ENCODE measurements at regions of chr5 and their contacts with region 1.

Region 1: GRCh38 chr5:31825518-31826068 is 186.7 kb downstream of the PDZD2 start:
- DNase-seq: peak; percentile 90
- ATAC-seq: peak; percentile 82
- H3K4me3 ChIP-seq: no peak overlapping the region
- H3K27ac ChIP-seq: no peak overlapping the region
- H3K4me1 ChIP-seq: peaks cover 22% of the 10 kb centered on the region
- H3K27me3 ChIP-seq: no peaks in the 10 kb centered on the region
- CTCF ChIP-seq: peak; percentile 90

Region 2: GRCh38 chr5:31854181-31855133 is 28.9 kb after region 1 on chr5:
- CTCF ChIA-PET with region 1: interaction called, 5 read pairs
- POLR2A ChIA-PET with region 1: no interaction called
- intact Hi-C with region 1: loop called (anchors 1 kb)
- DNase-seq: peak; percentile 81
- ATAC-seq: peak; percentile 74
- H3K4me3 ChIP-seq: peak overlapping the region; percentile 79
- H3K27ac ChIP-seq: peak overlapping the region; percentile 69
- H3K4me1 ChIP-seq: peaks cover 20% of the 10 kb centered on the region
- H3K27me3 ChIP-seq: no peaks in the 10 kb centered on the region
- CTCF ChIP-seq: no peak

Region 3: GRCh38 chr5:31934156-31934555 is 108.6 kb after region 1 on chr5:
- CTCF ChIA-PET with region 1: interaction called, 8 read pairs
- POLR2A ChIA-PET with region 1: no interaction called
- intact Hi-C with region 1: loop called (anchors 1 kb)
- DNase-seq: peak; percentile 6
- ATAC-seq: no peak
- H3K4me3 ChIP-seq: no peak overlapping the region
- H3K27ac ChIP-seq: no peak overlapping the region
- H3K4me1 ChIP-seq: no peaks in the 10 kb centered on the region
- H3K27me3 ChIP-seq: no peaks in the 10 kb centered on the region
- CTCF ChIP-seq: no peak

Region 4: GRCh38 chr5:31987985-31988710 is 162.6 kb after region 1 on chr5:
- CTCF ChIA-PET with region 1: interaction called, 3 read pairs
- POLR2A ChIA-PET with region 1: no interaction called
- intact Hi-C with region 1: loop called (anchors 5 kb)
- DNase-seq: peak; percentile 99
- ATAC-seq: peak; percentile 84
- H3K4me3 ChIP-seq: no peak overlapping the region
- H3K27ac ChIP-seq: peak overlapping the region; percentile 46
- H3K4me1 ChIP-seq: peaks cover 45% of the 10 kb centered on the region
- H3K27me3 ChIP-seq: no peaks in the 10 kb centered on the region
- CTCF ChIP-seq: no peak

Region 5: DNA sequence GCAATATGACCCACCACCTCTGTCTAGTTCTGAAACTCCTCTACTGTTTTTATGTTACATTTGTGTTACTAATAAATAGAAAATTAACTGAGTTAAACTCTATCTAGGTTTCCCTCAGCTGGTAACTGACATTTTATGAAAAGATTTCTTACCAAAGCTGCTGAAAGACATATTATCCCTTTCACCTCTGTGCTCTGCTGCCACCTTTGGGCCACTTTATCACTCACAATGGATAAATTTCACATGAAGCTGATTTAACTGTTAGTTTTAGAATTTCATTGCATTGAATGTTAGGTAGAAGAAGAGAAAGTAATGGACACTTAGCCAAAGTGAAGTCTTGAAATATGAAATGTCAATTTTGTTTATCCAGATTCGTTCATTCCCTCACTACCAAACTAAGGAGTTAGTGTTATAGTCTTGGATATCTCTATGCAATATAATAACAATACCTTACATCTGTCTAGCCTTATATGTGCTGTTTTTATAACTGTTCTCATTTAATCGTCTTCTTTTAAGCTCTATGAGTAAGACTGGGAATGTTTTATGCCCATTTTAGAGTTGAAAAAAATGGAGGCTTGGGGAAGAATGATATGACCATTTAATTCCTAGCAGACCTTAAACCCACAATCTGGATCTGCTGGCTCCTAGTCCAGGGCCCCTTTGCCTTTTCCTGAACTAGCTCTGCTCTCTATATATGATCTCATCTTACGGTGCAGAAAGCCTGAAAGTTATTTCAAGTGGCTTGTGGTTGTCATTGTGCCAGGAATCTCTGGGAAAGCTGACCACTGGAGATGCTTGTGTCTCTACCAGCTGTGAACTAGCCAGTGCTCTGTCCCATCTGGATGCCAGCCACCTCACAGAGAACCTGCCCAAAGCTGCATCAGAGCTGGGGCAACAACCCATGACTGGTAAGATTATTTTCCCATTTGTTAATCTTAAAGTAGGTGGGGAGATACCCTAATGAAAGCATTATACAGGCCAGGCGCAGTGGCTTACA is 251.4 kb after region 1 on chr5:
- CTCF ChIA-PET with region 1: interaction called, 13 read pairs
- POLR2A ChIA-PET with region 1: no interaction called
- intact Hi-C with region 1: loop called (anchors 1 kb)
- DNase-seq: peak; percentile 80
- ATAC-seq: peak; percentile 50
- H3K4me3 ChIP-seq: no peak overlapping the region
- H3K27ac ChIP-seq: no peak overlapping the region
- H3K4me1 ChIP-seq: peaks cover 2% of the 10 kb centered on the region
- H3K27me3 ChIP-seq: no peaks in the 10 kb centered on the region
- CTCF ChIP-seq: peak; percentile 97

Region 6: GRCh38 chr5:32092938-32093812 is 267.6 kb after region 1 on chr5:
- CTCF ChIA-PET with region 1: interaction called, 10 read pairs
- POLR2A ChIA-PET with region 1: no interaction called
- intact Hi-C with region 1: loop called (anchors 1 kb)
- DNase-seq: peak; percentile 89
- ATAC-seq: peak; percentile 99
- H3K4me3 ChIP-seq: no peak overlapping the region
- H3K27ac ChIP-seq: no peak overlapping the region
- H3K4me1 ChIP-seq: no peaks in the 10 kb centered on the region
- H3K27me3 ChIP-seq: no peaks in the 10 kb centered on the region
- CTCF ChIP-seq: peak; percentile 92

Region 7: DNA sequence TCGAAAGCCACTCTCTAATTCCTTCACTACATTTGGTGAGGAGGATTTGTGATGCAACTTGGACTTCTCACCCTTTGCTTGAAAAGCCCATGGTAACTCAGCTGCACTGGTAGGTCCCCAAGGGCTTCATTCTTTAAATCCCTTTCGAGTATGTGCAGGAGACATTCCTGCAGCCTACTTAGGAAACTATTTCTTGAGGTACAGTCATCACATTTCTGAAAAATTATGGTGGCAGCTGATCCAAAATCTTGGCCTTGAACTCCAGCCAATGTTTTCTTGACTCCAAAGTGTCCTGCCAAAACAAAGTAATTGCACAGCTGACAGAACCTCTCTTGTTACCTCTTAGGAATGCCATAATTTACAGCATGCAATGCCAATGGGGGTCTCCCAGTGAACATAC is 985.2 kb after region 1 on chr5:
- CTCF ChIA-PET with region 1: no interaction called
- POLR2A ChIA-PET with region 1: no interaction called
- intact Hi-C with region 1: no loop called
- DNase-seq: no peak
- ATAC-seq: no peak
- H3K4me3 ChIP-seq: no peak overlapping the region
- H3K27ac ChIP-seq: no peak overlapping the region
- H3K4me1 ChIP-seq: peaks cover 33% of the 10 kb centered on the region
- H3K27me3 ChIP-seq: no peaks in the 10 kb centered on the region
- CTCF ChIP-seq: no peak

Measured in PC-3 (cell line).